OCI-LY7 (cell line): ENCODE measurements at regions of chr1 and their contacts with region 1.

Region 1: DNA sequence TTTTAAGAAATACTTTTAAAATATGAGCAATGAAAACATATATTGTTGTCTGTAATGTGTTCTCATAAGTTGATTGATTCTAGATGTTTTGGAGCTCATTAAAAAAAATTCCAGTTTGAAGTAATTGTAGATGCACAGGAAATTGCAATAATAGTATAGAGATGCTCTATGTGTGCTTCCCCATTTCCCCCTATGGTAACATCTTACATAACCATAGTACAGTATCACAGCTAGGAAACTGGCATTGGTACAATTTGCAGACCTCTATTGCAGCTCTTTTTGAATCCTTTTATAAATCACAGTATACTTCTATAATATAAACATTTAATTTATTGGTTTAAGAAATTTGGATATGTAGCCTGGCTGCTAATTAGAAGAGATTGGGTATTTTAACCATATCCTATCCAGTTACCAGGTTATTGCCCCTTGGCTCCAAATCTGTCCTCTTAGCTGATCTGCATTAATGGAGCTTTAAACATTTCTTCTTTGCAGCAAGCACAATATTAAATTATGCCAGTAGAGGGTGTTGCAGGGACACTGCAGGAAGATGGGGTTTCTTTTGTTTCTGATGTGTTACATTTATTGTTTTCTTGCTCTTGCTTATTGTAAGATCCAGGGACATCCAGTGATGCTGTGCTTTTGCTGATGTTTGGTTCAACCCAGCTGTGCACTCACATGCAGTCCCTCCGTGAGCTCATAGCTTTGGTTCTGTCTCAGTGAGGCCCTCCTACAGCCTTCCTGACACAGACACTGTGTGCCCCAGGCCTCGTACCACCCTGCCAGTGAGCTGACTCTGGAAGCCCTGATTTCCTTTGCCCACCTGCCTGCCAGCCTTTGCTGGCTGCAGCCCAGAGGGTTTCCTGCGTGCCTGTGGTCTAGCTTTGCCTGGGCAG is 103.3 kb downstream of the RABGAP1L start:
- DNase-seq: peak; percentile 92
- H3K4me3 ChIP-seq: peak overlapping the region; percentile 20
- H3K27ac ChIP-seq: peak overlapping the region; percentile 82
- H3K4me1 ChIP-seq: peaks cover 70% of the 10 kb centered on the region
- CTCF ChIP-seq: peak; percentile 97

Region 2: DNA sequence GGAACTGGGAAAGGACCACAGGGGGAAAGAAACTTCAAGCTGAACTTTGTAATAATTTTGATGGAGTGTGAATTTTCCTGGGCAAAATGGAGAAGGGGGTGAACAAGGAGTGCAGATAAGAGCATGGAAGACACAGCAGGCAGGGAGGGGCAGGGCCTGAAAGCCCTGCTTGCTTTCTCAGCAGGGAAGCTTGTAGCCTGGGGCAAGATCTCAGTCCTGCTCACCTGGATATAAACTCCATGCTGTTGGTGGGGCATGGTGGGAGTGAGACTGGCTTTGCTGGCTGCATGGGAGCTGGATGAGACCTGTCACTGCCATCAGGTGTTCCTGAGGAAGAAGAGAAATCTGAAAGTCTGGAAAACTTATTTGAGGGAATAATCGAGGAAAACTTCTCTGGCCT is 181.8 kb before region 1 on chr1:
- CTCF ChIA-PET with region 1: no interaction called
- POLR2A ChIA-PET with region 1: no interaction called
- intact Hi-C with region 1: no loop called
- DNase-seq: no peak
- H3K4me3 ChIP-seq: no peak overlapping the region
- H3K27ac ChIP-seq: no peak overlapping the region
- H3K4me1 ChIP-seq: no peaks in the 10 kb centered on the region
- CTCF ChIP-seq: no peak

Region 3: GRCh38 chr1:174097426-174097825 is 165.2 kb before region 1 on chr1:
- CTCF ChIA-PET with region 1: no interaction called
- POLR2A ChIA-PET with region 1: interaction called, 7 read pairs
- intact Hi-C with region 1: loop called (anchors 5 kb)
- DNase-seq: no peak
- H3K4me3 ChIP-seq: no peak overlapping the region
- H3K27ac ChIP-seq: no peak overlapping the region
- H3K4me1 ChIP-seq: no peaks in the 10 kb centered on the region
- CTCF ChIP-seq: no peak

Region 4: GRCh38 chr1:174191255-174191906 is 71.2 kb before region 1 on chr1:
- CTCF ChIA-PET with region 1: no interaction called
- POLR2A ChIA-PET with region 1: no interaction called
- intact Hi-C with region 1: no loop called
- DNase-seq: no peak
- H3K4me3 ChIP-seq: no peak overlapping the region
- H3K27ac ChIP-seq: no peak overlapping the region
- H3K4me1 ChIP-seq: no peaks in the 10 kb centered on the region
- CTCF ChIP-seq: no peak

Region 5: GRCh38 chr1:174284052-174284451 is 21.5 kb after region 1 on chr1:
- CTCF ChIA-PET with region 1: no interaction called
- POLR2A ChIA-PET with region 1: interaction called, 10 read pairs
- intact Hi-C with region 1: no loop called
- DNase-seq: no peak
- H3K4me3 ChIP-seq: no peak overlapping the region
- H3K27ac ChIP-seq: no peak overlapping the region
- H3K4me1 ChIP-seq: peaks cover 11% of the 10 kb centered on the region
- CTCF ChIP-seq: no peak

Region 6: DNA sequence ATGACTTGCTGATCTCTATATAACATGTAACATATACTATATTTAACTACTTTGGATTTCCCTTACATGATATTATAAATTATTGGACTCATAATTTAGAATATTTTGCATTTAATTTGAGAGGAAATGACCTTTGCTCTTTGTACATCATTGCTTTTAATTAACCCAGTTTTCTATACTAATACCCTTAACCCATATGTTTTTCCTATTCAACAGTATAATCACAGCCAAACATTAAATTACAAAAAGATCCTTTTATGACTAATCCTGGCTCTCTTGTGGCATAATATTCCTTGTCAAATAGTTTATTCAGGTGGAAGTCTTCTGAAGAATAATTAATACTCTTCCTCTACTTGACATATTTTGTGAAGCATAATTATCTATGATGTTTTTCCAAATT is 129.1 kb after region 1 on chr1:
- CTCF ChIA-PET with region 1: no interaction called
- POLR2A ChIA-PET with region 1: no interaction called
- intact Hi-C with region 1: no loop called
- DNase-seq: no peak
- H3K4me3 ChIP-seq: no peak overlapping the region
- H3K27ac ChIP-seq: no peak overlapping the region
- H3K4me1 ChIP-seq: no peaks in the 10 kb centered on the region
- CTCF ChIP-seq: no peak

Region 7: DNA sequence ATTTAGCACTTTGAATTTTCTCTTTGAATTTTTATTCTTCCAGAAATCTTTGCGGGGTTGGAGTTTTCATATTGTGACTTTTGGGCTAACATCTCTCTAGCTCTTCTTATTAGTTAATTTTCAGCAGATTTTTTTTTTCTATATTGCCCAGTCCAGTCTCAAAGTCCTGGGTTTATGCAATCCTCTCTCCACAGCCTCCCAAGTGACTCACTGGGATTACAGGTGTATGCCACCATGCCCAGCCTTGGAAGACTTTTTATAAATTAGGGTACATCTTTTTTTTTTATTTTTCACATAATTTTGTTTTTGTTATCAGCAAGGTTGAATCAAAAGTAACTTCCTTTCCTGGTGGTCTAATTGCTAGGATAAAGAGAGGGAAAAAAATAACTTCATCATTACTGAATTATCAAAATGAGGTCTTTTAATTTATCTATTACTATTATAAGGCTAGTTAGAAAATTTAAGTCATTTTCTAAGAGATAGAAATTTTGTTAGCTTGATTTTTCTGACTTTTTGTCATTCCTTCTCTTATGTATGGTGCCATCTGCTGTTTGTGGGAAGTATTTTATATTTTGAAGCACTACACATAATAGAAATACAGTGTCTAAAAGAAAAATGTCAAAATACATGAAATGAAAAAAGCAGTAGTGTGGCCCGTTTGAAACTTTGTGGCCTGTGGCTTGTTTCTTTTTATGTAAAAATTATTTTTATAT is 463.7 kb after region 1 on chr1:
- CTCF ChIA-PET with region 1: interaction called, 6 read pairs
- POLR2A ChIA-PET with region 1: interaction called, 9 read pairs
- intact Hi-C with region 1: loop called (anchors 1 kb)
- DNase-seq: peak; percentile 60
- H3K4me3 ChIP-seq: no peak overlapping the region
- H3K27ac ChIP-seq: no peak overlapping the region
- H3K4me1 ChIP-seq: peaks cover 5% of the 10 kb centered on the region
- CTCF ChIP-seq: peak; percentile 95

Region 8: DNA sequence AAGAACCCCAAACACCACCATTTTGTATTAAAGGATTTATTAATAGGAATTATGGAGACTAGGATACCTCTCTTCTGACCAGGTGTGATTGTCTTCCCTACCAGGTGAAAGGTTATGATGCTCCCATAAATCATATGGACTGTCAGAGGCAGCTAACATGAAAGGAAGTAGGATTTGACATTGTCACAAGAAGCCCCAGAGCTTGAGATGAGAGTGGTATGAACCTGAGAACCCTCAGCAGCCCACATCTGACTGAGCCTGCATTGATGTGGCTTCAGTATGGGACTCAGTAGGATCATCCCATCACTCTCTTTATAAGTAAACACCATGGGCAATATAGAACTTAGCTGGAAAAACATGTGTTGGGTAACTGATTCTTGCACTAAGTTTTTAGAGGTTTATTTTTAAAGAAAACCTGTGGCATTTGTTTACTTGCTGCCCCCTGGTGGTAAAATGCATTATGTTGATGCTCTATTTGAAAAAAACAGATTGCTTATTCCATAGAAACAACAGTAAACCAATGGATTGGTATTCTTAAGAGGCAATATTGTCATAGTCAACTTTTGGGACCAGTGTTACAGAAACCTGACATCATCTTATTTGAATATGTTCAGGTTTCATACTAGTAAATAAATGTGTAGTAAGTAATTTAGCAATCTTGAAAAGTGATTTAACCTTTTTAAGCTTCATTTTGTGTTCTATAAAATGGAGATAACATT is 720.5 kb after region 1 on chr1:
- CTCF ChIA-PET with region 1: no interaction called
- POLR2A ChIA-PET with region 1: interaction called, 9 read pairs
- intact Hi-C with region 1: loop called (anchors 5 kb)
- DNase-seq: peak; percentile 76
- H3K4me3 ChIP-seq: no peak overlapping the region
- H3K27ac ChIP-seq: peak overlapping the region; percentile 14
- H3K4me1 ChIP-seq: peaks cover 7% of the 10 kb centered on the region
- CTCF ChIP-seq: peak; percentile 98